BJ (cell line): ENCODE measurements at regions of chr1 and their contacts with region 1.

Region 1: DNA sequence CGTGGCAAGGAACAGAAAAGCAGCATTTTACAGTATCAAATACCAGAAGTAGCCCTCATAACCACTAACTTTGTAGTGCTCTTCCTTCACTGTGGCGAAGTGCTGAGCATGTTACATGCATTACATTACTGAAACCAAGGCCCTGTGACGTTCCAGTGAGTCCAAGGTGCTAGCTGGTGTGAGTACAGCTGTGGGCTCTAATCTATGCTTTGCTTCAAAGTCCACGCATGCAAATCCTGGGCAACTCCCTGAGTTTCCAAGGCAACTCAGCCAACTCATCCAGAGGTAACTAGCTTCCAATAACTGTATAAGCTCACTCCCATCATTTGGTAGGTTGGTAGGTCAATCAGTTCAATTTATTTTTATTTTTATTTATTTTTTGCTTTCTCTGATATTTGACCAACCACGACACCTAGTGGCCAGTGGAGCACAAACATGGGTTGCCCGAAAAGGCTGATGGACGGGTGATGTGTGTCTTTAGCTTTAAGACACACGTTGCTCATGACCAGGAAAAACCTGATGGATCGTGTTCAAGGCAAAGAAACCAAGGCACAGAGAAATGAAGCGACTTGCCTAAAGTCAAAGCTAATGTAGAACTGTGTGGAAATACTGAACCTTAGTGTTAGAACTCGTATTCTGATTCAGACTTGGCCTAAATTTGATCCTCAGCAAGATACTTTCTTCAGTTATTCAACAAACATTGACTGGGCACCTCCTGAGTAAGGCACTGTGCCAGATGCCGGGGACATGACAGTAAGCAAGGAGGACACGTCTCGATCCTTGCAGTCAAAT is 73.0 kb downstream of the GNG12 start:
- DNase-seq: no peak
- H3K4me3 ChIP-seq: no peak overlapping the region
- H3K27me3 ChIP-seq: no peaks in the 10 kb centered on the region
- CTCF ChIP-seq: peak; percentile 81

Region 2: DNA sequence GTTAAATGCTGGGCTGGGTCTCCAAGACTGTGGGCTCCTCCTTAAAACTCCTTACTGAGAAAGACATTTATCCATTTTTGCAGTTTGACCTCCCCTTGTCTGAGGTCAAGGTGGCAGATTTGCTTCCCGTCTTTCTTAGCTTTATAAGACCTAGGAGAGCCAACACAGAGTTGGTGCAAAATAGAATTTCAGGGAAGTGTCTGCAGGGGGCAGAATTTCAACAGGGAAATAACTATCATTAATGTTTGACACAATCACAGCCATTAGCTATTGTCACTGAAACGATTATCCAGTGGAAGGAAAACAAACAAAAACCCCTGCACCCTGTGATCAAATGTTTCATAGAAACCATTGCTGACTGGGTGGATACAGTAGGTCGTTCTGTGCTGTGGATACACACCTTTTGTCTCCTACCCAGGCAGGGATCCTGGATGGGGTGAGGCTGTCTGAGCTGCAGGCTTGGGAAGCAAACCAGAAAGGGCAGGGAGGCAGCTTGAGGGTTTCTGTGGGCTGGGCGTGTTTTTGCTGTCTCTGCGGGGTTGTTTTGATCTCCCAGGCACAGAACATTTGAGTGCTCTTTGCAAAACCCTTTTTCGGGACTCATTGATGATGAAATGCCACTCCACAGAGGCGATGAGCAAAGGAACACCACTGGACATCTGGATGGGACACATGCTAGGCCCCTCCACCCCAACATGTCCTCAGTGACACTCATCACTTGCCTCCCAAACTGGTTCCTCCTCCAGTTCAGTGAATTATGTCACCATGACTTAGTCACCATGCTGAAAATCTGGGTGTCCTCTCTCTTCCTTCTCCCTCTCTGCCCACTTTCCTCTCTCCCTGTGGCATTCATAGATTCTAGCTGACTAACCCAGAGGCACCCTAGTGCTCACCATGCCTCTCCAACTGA is 235.8 kb before region 1 on chr1:
- CTCF ChIA-PET with region 1: interaction called, 18 read pairs
- POLR2A ChIA-PET with region 1: no interaction called
- DNase-seq: no peak
- H3K4me3 ChIP-seq: no peak overlapping the region
- H3K27me3 ChIP-seq: no peaks in the 10 kb centered on the region
- CTCF ChIP-seq: no peak

Region 3: DNA sequence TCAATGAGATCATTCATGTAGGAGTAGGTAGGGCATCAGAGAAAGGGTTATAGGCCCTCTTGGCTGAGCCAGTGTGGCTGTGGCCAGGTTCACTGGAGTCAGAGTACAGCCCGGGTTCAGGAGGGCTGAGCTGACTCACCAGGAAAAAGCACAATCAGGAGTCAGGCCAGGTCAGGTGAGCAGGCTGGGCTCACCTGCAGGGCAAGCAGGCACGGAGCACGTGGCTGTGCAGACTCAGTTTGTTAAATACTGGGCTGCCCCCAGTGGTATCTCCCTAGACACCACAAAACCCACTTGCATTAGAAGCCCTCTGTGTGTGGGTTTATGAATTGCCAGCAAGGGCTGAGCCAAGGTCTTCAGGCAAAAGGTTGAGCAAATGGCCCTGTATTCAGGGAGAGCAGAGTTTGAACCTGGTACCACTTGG is 207.9 kb before region 1 on chr1:
- CTCF ChIA-PET with region 1: interaction called, 93 read pairs
- POLR2A ChIA-PET with region 1: no interaction called
- DNase-seq: no peak
- H3K4me3 ChIP-seq: no peak overlapping the region
- H3K27me3 ChIP-seq: no peaks in the 10 kb centered on the region
- CTCF ChIP-seq: no peak

Region 4: DNA sequence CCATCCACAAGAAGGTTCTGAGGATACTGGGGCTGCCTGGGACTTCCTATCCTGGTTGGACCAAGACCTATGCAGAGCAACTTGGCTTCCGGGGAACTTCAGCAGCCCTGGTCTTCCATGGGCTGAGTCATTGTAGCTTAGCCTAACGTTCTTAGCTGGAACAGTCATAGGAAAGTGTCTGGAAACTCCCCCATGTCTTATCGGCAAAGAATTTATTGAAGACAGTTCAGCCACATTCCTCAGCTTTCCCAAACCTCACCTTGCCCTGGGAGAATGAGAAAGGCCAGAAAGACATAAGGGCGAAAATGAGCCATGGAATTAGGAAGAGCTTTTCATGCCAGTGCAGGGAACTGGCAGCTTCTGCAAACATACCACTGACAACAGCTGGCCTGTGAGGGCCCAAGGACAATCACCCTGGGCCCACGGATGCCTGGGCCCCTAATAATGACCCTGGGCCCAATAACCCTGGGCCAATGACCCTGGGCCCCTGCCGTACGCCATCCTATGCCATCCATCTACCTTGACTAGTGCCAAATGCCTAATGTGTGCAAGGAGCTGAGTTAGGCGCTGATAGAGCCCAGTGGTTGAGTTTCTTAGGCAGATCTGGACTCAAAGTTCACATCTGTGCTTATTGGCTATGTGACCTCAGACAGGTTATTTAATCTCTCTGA is 189.6 kb before region 1 on chr1:
- CTCF ChIA-PET with region 1: interaction called, 42 read pairs
- POLR2A ChIA-PET with region 1: no interaction called
- DNase-seq: peak; percentile 90
- H3K4me3 ChIP-seq: no peak overlapping the region
- H3K27me3 ChIP-seq: no peaks in the 10 kb centered on the region
- CTCF ChIP-seq: no peak

Region 5: GRCh38 chr1:67722292-67722944 is 37.8 kb before region 1 on chr1:
- CTCF ChIA-PET with region 1: interaction called, 10 read pairs
- POLR2A ChIA-PET with region 1: no interaction called
- DNase-seq: no peak
- H3K4me3 ChIP-seq: no peak overlapping the region
- H3K27me3 ChIP-seq: no peaks in the 10 kb centered on the region
- CTCF ChIP-seq: no peak

Region 6: DNA sequence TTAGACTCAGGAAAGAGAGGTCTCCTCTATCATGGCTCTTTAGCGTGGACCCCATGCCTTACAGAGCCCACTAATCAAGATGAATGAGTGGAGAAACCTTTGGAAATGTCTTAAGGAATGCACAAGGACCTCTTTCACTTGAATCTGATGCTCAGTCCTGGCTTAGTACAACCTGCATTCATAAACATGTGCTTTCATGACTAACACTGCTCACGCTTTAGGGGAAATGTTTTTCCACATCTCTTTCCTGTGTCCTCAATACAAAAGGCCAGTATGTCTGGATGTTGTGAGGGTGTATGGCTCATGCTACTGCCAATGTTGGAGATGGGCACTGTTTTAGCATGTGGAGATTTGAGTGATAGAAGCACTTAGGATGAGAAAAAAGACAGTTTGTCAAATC is 87.2 kb after region 1 on chr1:
- CTCF ChIA-PET with region 1: interaction called, 67 read pairs
- POLR2A ChIA-PET with region 1: no interaction called
- DNase-seq: no peak
- H3K4me3 ChIP-seq: no peak overlapping the region
- H3K27me3 ChIP-seq: no peaks in the 10 kb centered on the region
- CTCF ChIP-seq: no peak